ENCODE measurements at regions of chr17 and their contacts with region 1.

Region 1: DNA sequence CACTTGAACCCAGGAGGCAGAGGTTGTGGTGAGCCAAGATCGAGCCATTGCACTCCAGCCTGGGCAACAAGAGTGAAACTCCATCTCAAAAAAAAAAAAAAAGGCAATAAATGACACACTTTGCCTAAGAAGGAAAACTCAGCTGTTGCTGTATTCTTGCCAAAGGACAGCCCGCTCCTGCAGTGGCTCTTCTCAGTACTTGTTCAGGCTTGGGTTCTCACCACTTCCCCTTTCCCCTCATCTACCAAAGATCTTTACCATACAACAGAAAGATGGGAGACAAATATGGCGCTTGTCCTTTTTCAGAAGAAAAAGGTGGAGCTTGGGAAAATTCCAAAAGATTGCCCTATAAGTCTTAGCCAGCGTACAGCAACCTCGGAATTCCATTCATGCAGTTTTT is 58.5 kb downstream of the MYH13 start:
- DNase-seq: no peak
- ATAC-seq: no peak
- H3K4me3 ChIP-seq: no peak overlapping the region
- H3K4me3 Mint-ChIP-seq: no peak overlapping the region
- H3K27ac ChIP-seq: no peak overlapping the region
- H3K27ac Mint-ChIP-seq: no peak overlapping the region
- H3K4me1 ChIP-seq: no peaks in the 10 kb centered on the region
- H3K4me1 Mint-ChIP-seq: no peaks in the 10 kb centered on the region
- H3K27me3 ChIP-seq: peaks cover 0 to 3% of the 10 kb centered on the region in 2 experiments
- H3K27me3 Mint-ChIP-seq: peaks cover 8% of the 10 kb centered on the region
- CTCF ChIP-seq: no peak

Region 2: DNA sequence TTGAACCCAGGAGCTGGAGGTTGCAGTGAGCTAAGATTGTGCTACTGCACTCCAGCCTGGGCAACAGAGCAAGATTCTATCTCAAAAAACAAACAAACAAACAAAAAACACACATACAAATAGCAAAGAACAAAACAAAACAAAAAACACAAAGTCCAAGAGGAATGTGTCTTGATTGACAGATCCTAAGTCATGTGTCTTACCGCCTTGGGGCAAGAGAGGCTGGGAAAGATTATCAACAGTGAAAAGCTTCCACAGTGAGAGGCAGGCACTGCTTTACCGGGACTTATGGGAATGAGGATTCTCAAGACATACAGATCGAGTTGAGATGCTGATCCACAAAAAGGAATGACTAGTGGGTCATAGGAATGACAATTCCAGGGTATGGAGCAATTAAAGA is 53.2 kb before region 1 on chr17:
- CTCF ChIA-PET with region 1: no interaction called
- POLR2A ChIA-PET with region 1: no interaction called
- intact Hi-C with region 1: loop called in 1 of 2 experiments (anchors 5 kb)
- DNase-seq: no peak
- ATAC-seq: no peak
- H3K4me3 ChIP-seq: no peak overlapping the region
- H3K4me3 Mint-ChIP-seq: no peak overlapping the region
- H3K27ac ChIP-seq: no peak overlapping the region
- H3K27ac Mint-ChIP-seq: no peak overlapping the region
- H3K4me1 ChIP-seq: no peaks in the 10 kb centered on the region
- H3K4me1 Mint-ChIP-seq: no peaks in the 10 kb centered on the region
- H3K27me3 ChIP-seq: no peaks in the 10 kb centered on the region
- H3K27me3 Mint-ChIP-seq: peaks cover 5% of the 10 kb centered on the region
- CTCF ChIP-seq: no peak

Region 3: DNA sequence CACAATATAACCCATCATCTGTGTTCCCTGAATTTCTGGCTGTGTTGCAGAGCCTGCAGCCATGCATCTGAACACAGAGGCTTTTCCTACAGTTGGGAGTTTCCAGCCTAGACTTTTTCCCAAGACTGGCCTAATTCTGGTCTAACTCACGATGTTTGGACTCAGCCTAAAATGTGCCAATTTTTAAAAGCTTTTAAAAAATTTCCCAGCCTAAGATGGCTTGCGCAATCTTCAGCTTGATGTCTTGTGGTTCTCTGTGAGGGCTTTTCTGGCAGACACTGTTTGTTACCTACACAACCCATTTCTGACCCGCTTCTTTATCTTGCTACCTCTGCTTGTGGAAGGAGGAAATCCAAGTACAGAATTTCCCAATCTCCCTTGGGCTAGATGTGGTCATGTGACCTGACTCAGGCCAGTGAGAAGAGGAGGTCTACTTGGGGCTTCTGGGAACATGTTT is 43.2 kb before region 1 on chr17:
- CTCF ChIA-PET with region 1: no interaction called
- POLR2A ChIA-PET with region 1: no interaction called
- intact Hi-C with region 1: no loop called
- DNase-seq: no peak
- ATAC-seq: no peak
- H3K4me3 ChIP-seq: no peak overlapping the region
- H3K4me3 Mint-ChIP-seq: no peak overlapping the region
- H3K27ac ChIP-seq: no peak overlapping the region
- H3K27ac Mint-ChIP-seq: no peak overlapping the region
- H3K4me1 ChIP-seq: no peaks in the 10 kb centered on the region
- H3K4me1 Mint-ChIP-seq: no peaks in the 10 kb centered on the region
- H3K27me3 ChIP-seq: no peaks in the 10 kb centered on the region
- H3K27me3 Mint-ChIP-seq: peaks cover 18% of the 10 kb centered on the region
- CTCF ChIP-seq: no peak